Dendritic cell treated with granulocyte-macrophage colony-stimulating factor and Interleukin-4, amounts not matched to agents 40 ng/mL and 50 ng/mL, for 4 days (primary cell): ENCODE measurements at regions of chr6 and their contacts with region 1.

Region 1: GRCh38 chr6:158769771-158770432 is 49.3 kb downstream of the EZR start:
- H3K4me3 Mint-ChIP-seq: no peak overlapping the region
- H3K27ac Mint-ChIP-seq: no peak overlapping the region
- H3K4me1 Mint-ChIP-seq: peaks cover 16% of the 10 kb centered on the region
- H3K27me3 Mint-ChIP-seq: no peaks in the 10 kb centered on the region

Region 2: GRCh38 chr6:158704181-158704822 is 65.6 kb before region 1 on chr6:
- intact Hi-C with region 1: loop called (anchors 10 kb)
- H3K4me3 Mint-ChIP-seq: peak overlapping the region; percentile 93
- H3K27ac Mint-ChIP-seq: peak overlapping the region; percentile 68
- H3K4me1 Mint-ChIP-seq: peaks cover 15% of the 10 kb centered on the region
- H3K27me3 Mint-ChIP-seq: no peaks in the 10 kb centered on the region

Region 3: GRCh38 chr6:158793432-158793831 is 23.5 kb after region 1 on chr6:
- intact Hi-C with region 1: no loop called
- H3K4me3 Mint-ChIP-seq: no peak overlapping the region
- H3K27ac Mint-ChIP-seq: no peak overlapping the region
- H3K4me1 Mint-ChIP-seq: peaks cover 20% of the 10 kb centered on the region
- H3K27me3 Mint-ChIP-seq: no peaks in the 10 kb centered on the region